ENCODE measurements at regions of chr18 and their contacts with region 1.

Region 1: DNA sequence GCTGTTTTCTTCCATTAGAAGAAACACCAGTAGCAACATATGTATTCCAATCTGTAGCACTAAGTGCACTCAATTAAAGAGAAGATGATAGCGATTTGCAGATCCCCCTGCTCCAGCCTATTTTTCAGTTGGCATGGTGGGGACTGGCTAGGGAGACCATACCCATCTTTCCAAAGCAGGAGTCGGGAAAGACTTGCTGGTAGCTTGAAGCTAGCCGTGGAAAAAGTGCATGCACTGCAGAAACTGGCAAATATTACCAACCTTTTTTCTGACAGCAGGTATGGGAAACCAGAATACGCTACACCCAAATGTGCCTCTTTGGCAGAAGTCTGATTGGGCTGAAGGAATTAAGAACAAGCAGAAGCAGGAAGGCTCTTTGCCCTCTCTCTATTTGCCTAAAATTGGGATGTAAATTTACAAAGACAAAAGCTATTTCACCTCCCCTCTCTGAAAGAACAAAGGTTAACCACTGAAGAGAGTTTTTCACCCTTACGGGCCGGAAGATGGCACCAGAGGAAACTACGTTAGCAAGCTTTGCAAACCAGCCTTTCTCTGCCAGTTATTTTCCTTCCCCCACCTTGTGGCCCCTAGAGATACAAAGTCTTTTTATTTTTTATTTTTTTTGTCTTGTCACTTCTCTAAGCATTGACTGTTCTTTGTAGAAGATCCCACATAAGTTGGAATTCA is 273.1 kb downstream of the DLGAP1 start:
- DNase-seq: no peak
- H3K4me3 Mint-ChIP-seq: no peak overlapping the region
- H3K27ac Mint-ChIP-seq: no peak overlapping the region
- H3K4me1 Mint-ChIP-seq: no peaks in the 10 kb centered on the region
- H3K27me3 Mint-ChIP-seq: peaks cover 29% of the 10 kb centered on the region
- CTCF ChIP-seq: peak; percentile 39

Region 2: GRCh38 chr18:4134700-4135099 is 47.3 kb before region 1 on chr18:
- CTCF ChIA-PET with region 1: no interaction called
- POLR2A ChIA-PET with region 1: no interaction called
- intact Hi-C with region 1: no loop called
- DNase-seq: no peak
- H3K4me3 Mint-ChIP-seq: no peak overlapping the region
- H3K27ac Mint-ChIP-seq: no peak overlapping the region
- H3K4me1 Mint-ChIP-seq: no peaks in the 10 kb centered on the region
- H3K27me3 Mint-ChIP-seq: peaks cover 87% of the 10 kb centered on the region
- CTCF ChIP-seq: no peak

Region 3: GRCh38 chr18:5021558-5021957 is 839.5 kb after region 1 on chr18:
- CTCF ChIA-PET with region 1: interaction called, 10 read pairs
- POLR2A ChIA-PET with region 1: no interaction called
- intact Hi-C with region 1: loop called (anchors 1 kb)
- DNase-seq: no peak
- H3K4me3 Mint-ChIP-seq: no peak overlapping the region
- H3K27ac Mint-ChIP-seq: no peak overlapping the region
- H3K4me1 Mint-ChIP-seq: no peaks in the 10 kb centered on the region
- H3K27me3 Mint-ChIP-seq: no peaks in the 10 kb centered on the region
- CTCF ChIP-seq: no peak

Measured in MCF 10A (cell line).